ENCODE measurements at regions of chr3 and their contacts with region 1.

Region 1: GRCh38 chr3:113287803-113288648 is 76.7 kb downstream of the BOC start:
- DNase-seq: peak; percentile 10
- H3K4me3 Mint-ChIP-seq: no peak overlapping the region
- H3K27ac Mint-ChIP-seq: no peak overlapping the region
- H3K4me1 Mint-ChIP-seq: peaks cover 6% of the 10 kb centered on the region
- H3K27me3 Mint-ChIP-seq: peaks cover 2% of the 10 kb centered on the region

Region 2: GRCh38 chr3:112582244-112582874 is 705.7 kb before region 1 on chr3:
- intact Hi-C with region 1: loop called (anchors 1 kb)
- DNase-seq: no peak
- H3K4me3 Mint-ChIP-seq: no peak overlapping the region
- H3K27ac Mint-ChIP-seq: no peak overlapping the region
- H3K4me1 Mint-ChIP-seq: peaks cover 6% of the 10 kb centered on the region
- H3K27me3 Mint-ChIP-seq: no peaks in the 10 kb centered on the region

Region 3: GRCh38 chr3:113035387-113035982 is 252.5 kb before region 1 on chr3:
- intact Hi-C with region 1: loop called (anchors 5 kb)
- DNase-seq: peak; percentile 15
- H3K4me3 Mint-ChIP-seq: no peak overlapping the region
- H3K27ac Mint-ChIP-seq: no peak overlapping the region
- H3K4me1 Mint-ChIP-seq: no peaks in the 10 kb centered on the region
- H3K27me3 Mint-ChIP-seq: no peaks in the 10 kb centered on the region

Region 4: GRCh38 chr3:113051302-113051711 is 236.7 kb before region 1 on chr3:
- intact Hi-C with region 1: loop called (anchors 1 kb)
- DNase-seq: peak; percentile 81
- H3K4me3 Mint-ChIP-seq: no peak overlapping the region
- H3K27ac Mint-ChIP-seq: no peak overlapping the region
- H3K4me1 Mint-ChIP-seq: no peaks in the 10 kb centered on the region
- H3K27me3 Mint-ChIP-seq: peaks cover 4% of the 10 kb centered on the region

Region 5: DNA sequence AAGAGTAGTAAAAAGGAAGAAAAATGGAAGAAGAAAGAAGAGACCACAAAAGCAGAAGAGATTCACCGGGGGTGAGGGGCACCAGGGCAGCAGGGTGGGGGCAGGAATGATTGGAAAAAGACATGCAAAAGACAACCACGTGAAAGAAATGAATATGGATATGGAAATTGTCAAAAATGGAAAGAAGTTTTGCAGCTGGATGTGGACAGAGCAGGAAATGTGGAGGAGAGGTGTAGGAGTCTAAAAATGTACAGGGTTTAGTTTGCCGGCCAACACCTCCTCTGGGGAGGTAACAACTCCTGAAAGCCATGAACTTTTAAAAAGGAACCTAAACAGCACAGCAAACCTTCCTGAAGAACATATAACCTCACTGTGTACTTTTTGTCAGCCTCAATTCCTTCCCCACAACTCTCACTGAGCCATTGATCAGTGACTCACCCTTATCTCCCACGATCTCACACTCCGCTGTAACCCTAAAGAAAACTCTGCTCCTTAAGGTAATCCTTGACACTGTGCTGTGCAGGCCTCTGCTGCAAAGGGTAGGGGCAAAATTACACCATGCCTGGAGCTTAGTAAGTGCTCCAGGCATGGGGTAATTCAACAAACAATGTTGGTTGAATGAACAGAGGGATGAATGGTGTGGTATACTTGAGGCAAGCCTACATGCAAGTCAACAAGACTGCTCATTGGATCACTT is 176.9 kb before region 1 on chr3:
- intact Hi-C with region 1: loop called (anchors 5 kb)
- DNase-seq: peak; percentile 5
- H3K4me3 Mint-ChIP-seq: no peak overlapping the region
- H3K27ac Mint-ChIP-seq: peak overlapping the region; percentile 21
- H3K4me1 Mint-ChIP-seq: peaks cover 33% of the 10 kb centered on the region
- H3K27me3 Mint-ChIP-seq: no peaks in the 10 kb centered on the region

Region 6: GRCh38 chr3:113136071-113136470 is 152.0 kb before region 1 on chr3:
- intact Hi-C with region 1: loop called (anchors 1 kb)
- DNase-seq: no peak
- H3K4me3 Mint-ChIP-seq: no peak overlapping the region
- H3K27ac Mint-ChIP-seq: no peak overlapping the region
- H3K4me1 Mint-ChIP-seq: peaks cover 2% of the 10 kb centered on the region
- H3K27me3 Mint-ChIP-seq: no peaks in the 10 kb centered on the region

Region 7: DNA sequence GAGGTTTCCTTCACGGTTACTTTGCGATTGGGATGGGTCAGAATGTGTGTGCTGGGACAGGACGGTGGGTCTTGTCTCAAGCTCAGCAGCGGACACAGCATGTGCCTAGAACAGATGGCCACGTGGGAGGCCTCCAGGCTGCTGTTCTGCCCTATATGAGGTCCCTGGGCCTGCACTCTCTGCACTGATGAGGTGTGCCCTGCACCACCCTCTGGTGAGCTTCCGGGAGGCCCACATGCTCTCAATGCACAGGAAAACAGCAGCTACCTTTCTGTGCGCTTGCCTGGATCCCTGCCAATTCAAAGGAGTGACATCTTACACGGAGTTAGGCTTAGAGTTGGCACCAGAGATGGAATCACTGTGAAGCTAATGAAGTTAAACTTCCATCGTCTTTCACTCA is 16.8 kb before region 1 on chr3:
- intact Hi-C with region 1: no loop called
- DNase-seq: no peak
- H3K4me3 Mint-ChIP-seq: no peak overlapping the region
- H3K27ac Mint-ChIP-seq: no peak overlapping the region
- H3K4me1 Mint-ChIP-seq: peaks cover 5% of the 10 kb centered on the region
- H3K27me3 Mint-ChIP-seq: no peaks in the 10 kb centered on the region